Testis (tissue), 5 donors: ENCODE measurements at regions of chr3 and their contacts with region 1.

Region 1: DNA sequence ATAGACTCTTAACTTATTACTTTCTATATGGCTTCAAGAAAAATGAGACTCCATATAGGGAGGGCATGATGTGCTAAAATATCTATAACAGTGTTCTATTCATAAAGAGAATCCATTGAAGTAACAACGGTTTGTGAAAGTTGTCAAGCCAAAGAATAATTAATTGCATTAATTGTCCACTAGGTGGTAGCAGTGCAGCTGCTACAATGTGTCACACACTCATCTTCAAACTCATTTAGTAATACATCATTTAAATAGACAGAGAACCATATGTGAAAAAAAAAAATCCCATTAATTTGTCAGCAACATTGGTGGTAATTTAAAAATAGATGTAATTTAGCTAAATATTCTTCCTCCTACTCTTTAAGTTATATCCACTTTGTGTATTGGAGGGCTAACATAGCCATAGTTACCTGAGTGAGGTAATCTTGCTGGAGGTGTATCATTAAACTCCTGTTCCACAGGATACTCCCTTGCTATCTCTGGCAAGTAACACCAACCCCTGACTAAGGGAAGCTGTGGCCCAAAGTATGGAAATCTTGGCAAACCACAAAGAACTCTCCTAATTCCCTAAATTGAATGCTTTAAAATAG is 3.7 kb upstream of the CPA3 start:
- DNase-seq: no peak
- H3K4me3 ChIP-seq: no peak overlapping the region
- H3K27ac ChIP-seq: no peak overlapping the region
- H3K4me1 ChIP-seq: no peaks in the 10 kb centered on the region
- H3K27me3 ChIP-seq: no peaks in the 10 kb centered on the region
- CTCF ChIP-seq: peak; percentile 60 to 91 (median 66)
- POLR2A ChIP-seq: no peak

Region 2: DNA sequence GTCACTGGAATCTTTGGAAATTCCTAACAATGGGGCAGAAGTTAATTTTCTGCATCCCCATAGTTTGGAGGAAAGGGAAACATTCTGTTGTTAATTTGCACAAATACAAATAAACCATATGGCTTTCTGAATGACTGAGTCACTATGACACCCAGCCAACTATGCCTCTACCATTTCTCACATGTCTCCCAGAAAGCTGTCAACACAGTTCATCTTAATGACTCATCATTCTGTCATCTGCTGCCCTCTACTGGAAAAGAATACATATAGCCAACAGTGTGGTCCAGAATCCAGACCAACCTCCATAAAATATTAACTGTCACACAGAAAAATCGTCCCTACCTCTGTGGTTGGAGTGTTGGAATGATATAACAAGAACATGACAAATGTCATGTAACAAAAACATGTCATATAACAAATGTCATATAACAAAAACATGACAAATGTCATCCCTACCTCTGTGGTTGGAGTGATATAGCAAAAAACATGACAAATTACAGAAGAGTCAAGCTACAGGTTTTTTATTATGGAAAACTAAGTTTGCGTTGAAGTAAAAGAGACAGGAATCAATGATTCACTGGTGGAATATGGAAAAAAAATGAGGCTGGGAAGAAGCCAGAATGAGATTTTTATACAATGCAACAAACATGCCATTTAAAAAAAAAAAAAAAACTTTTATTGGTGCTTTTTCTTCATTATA is 82.3 kb after region 1 on chr3:
- intact Hi-C with region 1: loop called (anchors 10 kb)
- DNase-seq: no peak
- H3K4me3 ChIP-seq: no peak overlapping the region
- H3K27ac ChIP-seq: no peak overlapping the region
- H3K4me1 ChIP-seq: no peaks in the 10 kb centered on the region
- H3K27me3 ChIP-seq: no peaks in the 10 kb centered on the region
- CTCF ChIP-seq: peak; percentile 62 to 69 (median 66)
- POLR2A ChIP-seq: no peak